Activated T-helper 1 cell treated with anti-CD3 and anti-CD28 coated beads, Interleukin-12 subunit alpha, Interleukin-12 subunit beta, Interleukin-2, Interleukin-4 antibody, amounts not matched to agents 30 ng/mL and 10 ng/mL and 1 ng/mL, durations not matched to agents 14 hours and 24 hours and 36 hours (primary cell): ENCODE measurements at regions of chr2 and their contacts with region 1.

Region 1: GRCh38 chr2:10654069-10654468 is 35.7 kb downstream of the NOL10 start:
- DNase-seq: peak; percentile 34
- H3K4me3 Mint-ChIP-seq: peak overlapping the region; percentile 74
- H3K27ac Mint-ChIP-seq: peak overlapping the region; percentile 93
- H3K4me1 Mint-ChIP-seq: peaks cover 54% of the 10 kb centered on the region
- H3K27me3 Mint-ChIP-seq: no peaks in the 10 kb centered on the region

Region 2: DNA sequence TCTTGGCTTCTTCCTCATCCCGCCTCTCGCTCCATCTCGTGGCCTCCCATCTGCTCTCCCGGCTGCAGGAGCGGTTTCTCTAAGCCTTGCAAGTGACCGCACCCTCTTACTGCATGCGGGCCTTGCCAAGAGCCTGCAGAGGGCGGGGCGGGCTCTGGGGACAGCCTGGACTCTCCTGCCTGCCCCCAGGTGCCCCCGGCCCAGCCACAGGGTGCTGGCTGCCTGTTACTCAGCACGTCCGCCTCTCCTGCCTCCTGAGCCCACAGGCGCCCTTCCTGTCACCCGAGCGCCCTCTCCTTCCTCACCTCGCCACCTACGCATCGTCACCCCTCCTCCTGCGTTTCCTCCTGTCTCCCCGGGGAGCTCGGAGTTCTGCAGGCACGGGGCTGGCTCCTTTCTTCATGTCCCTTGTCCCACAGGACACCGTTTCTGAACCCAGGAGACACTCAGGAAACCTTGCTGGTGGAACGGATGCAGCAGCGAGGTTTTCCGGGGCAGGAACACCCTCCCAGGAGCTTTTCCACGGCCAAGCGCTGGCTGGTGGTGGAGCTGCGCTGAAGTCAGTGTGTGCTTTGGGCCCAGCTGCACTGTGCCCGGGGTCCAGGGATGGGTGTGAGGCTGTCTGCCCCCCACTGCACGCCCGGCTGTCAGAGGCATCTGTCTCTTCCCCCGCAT is 322.9 kb before region 1 on chr2:
- intact Hi-C with region 1: loop called (anchors 2 kb)
- DNase-seq: peak; percentile 62
- H3K4me3 Mint-ChIP-seq: peak overlapping the region; percentile 86
- H3K27ac Mint-ChIP-seq: peak overlapping the region; percentile 95
- H3K4me1 Mint-ChIP-seq: peaks cover 59% of the 10 kb centered on the region
- H3K27me3 Mint-ChIP-seq: no peaks in the 10 kb centered on the region

Region 3: DNA sequence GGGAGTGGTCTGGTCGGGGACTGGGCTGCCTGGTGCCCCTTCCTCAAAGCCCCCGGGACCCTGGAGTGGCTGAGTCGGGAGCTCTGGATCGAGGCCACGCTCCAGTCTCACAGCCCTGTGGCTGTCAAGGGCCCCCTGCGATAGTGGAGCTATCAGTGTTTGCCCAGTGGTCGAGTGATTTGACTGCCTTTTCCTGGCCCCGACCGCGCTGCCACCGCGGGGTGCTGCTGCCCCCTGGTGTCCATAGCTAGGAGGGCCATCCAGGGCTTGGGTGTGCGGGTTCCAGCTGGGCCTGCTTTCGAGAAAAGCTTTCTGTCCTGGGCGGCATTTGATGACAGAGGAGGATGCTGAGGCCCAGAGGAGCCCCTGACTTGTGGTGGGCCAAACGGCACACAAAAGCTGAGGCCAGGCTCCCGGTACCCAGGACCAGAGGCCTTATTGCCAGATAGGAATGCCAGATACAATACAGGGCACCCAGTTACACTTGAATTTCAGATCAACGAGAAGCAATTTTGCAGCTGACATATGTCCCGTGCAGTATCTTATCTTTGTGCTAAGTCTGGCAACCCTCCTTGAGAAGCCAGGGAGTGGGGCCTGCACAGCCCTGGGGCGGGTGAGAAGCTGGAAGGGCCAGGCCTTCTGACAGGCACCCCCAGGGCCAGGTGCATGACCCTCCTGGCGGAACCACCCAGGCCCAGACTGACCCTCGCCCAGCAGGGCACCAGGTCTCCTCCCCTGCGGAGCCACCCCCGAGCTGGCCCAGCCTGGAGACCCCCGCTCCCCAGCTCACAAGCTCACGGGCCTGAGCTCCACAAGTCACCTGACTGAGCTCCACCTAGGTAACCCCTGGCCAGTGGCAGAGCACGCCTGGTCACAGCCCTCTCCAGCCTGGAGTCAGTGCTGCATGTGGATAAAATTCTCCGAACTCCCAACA is 218.9 kb before region 1 on chr2:
- intact Hi-C with region 1: no loop called
- DNase-seq: peak; percentile 65
- H3K4me3 Mint-ChIP-seq: no peak overlapping the region
- H3K27ac Mint-ChIP-seq: peak overlapping the region; percentile 35
- H3K4me1 Mint-ChIP-seq: peaks cover 6% of the 10 kb centered on the region
- H3K27me3 Mint-ChIP-seq: peaks cover 2% of the 10 kb centered on the region

Region 4: GRCh38 chr2:10493636-10494281 is 160.3 kb before region 1 on chr2:
- intact Hi-C with region 1: loop called (anchors 5 kb)
- DNase-seq: peak; percentile 55
- H3K4me3 Mint-ChIP-seq: no peak overlapping the region
- H3K27ac Mint-ChIP-seq: no peak overlapping the region
- H3K4me1 Mint-ChIP-seq: peaks cover 11% of the 10 kb centered on the region
- H3K27me3 Mint-ChIP-seq: peaks cover 24% of the 10 kb centered on the region

Region 5: GRCh38 chr2:10544252-10544651 is 109.8 kb before region 1 on chr2:
- intact Hi-C with region 1: loop called (anchors 1 kb)
- DNase-seq: peak; percentile 45
- H3K4me3 Mint-ChIP-seq: peak overlapping the region; percentile 46
- H3K27ac Mint-ChIP-seq: peak overlapping the region; percentile 40
- H3K4me1 Mint-ChIP-seq: peaks cover 42% of the 10 kb centered on the region
- H3K27me3 Mint-ChIP-seq: peaks cover 8% of the 10 kb centered on the region

Region 6: GRCh38 chr2:10620481-10620880 is 33.6 kb before region 1 on chr2:
- intact Hi-C with region 1: loop called (anchors 1 kb)
- DNase-seq: no peak
- H3K4me3 Mint-ChIP-seq: peak overlapping the region; percentile 37
- H3K27ac Mint-ChIP-seq: peak overlapping the region; percentile 68
- H3K4me1 Mint-ChIP-seq: peaks cover 75% of the 10 kb centered on the region
- H3K27me3 Mint-ChIP-seq: no peaks in the 10 kb centered on the region

Region 7: GRCh38 chr2:10668402-10669012 is 14.4 kb after region 1 on chr2:
- intact Hi-C with region 1: loop called (anchors 1 kb)
- DNase-seq: no peak
- H3K4me3 Mint-ChIP-seq: no peak overlapping the region
- H3K27ac Mint-ChIP-seq: no peak overlapping the region
- H3K4me1 Mint-ChIP-seq: peaks cover 5% of the 10 kb centered on the region
- H3K27me3 Mint-ChIP-seq: no peaks in the 10 kb centered on the region

Region 8: DNA sequence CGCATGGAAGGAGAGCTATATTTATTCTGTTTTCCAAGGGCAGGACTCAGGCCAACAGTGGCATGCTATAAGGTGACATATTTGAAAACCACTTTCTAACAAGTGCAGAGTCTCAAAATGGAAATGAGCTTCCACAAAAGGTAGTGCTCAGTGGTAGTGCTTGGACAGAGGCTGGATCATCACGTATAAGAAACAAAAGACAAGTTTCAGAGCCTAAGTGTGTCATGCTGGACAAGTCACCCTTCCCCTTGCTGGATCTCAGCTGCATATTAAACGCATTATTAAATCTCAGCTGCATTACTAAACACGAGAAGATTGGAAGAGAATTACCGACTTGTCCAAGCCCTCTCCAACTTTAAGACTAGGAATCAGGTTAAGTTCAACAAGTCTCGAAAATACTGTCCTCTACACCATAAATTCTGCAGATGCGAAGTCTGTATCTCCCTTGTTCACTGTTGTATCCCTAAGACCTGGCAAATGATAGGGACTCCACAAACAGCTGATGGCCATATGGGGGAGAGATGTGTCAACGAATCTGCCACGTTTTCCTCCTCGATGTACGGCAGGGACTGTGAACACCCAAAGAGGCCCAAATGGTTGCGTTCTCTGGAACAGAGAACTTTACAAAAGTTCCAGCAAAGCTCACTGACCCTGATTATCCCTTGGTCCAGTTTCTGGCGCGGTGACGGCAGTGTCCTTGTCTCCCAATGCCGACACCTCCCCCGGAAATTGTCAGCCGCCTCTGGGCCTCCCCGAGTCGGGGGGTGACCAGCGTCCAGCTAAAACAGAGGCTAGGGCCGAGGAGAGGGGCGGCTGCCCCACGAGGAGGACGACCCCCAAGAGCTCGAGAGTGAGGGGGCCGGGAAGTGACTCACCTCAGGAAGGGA is 35.1 kb after region 1 on chr2:
- intact Hi-C with region 1: loop called (anchors 2 kb)
- DNase-seq: no peak
- H3K4me3 Mint-ChIP-seq: no peak overlapping the region
- H3K27ac Mint-ChIP-seq: no peak overlapping the region
- H3K4me1 Mint-ChIP-seq: peaks cover 8% of the 10 kb centered on the region
- H3K27me3 Mint-ChIP-seq: no peaks in the 10 kb centered on the region